Activated CD8-positive, alpha-beta memory T cell treated with anti-CD3 and anti-CD28 coated beads, Interleukin-2, amount 10 ng/mL, durations not matched to agents 7 days and 5 days (primary cell): ENCODE measurements at regions of chr9 and their contacts with region 1.

Region 1: DNA sequence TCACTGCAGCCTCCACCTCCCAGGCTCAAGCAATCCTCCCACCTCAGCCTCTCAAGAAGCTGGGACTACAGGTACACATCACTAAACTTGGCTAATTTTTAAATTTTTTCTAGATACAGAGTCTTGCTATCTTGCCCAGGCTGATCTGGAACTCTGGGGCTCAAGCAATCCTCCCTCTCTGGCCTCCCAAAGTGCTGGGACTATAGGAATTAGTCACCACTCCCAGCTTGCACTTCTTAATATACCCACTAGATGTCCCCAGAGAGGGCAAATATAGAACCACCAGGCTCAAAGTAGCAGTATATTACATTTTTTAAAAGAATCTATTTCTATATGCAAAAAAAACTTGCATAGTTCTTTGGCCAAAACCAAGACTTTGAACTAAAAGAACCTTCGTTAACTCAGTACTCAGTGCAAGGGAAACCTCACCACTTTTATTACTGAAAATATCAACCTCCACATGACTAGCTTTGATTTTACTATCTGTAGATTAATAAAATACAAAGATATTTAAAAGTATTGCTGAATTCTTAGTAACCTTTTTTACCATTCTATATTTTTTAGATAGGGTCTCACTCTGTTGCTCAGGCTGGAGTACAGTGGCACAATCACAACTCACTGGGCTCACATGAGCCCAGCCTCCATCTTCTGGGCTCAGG is 25.8 kb upstream of the HSD17B3 start:
- DNase-seq: peak; percentile 53
- ATAC-seq: peak; percentile 71
- H3K4me3 Mint-ChIP-seq: no peak overlapping the region
- H3K27ac Mint-ChIP-seq: no peak overlapping the region
- H3K4me1 Mint-ChIP-seq: no peaks in the 10 kb centered on the region
- H3K27me3 Mint-ChIP-seq: no peaks in the 10 kb centered on the region

Region 2: DNA sequence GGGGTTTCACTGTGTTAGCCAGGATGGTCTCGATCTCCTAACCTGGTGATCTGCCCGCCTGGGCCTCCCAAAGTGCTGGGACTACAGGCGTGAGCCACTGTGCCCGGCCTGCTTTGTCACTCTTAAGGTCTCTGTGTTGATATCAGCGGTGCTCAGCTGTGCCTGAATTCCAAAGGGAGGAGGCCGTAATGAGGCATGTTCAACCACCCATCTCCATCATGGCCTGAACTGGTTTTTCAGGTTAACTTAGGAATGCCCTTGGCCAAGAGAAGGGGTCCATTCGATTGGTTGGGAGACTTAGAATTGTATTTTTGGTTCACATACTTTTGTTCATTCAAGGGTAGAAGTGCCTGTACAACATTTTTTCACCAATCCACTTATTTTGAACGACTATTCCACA is 47.9 kb before region 1 on chr9:
- CTCF ChIA-PET with region 1: no interaction called
- DNase-seq: no peak
- ATAC-seq: no peak
- H3K4me3 Mint-ChIP-seq: no peak overlapping the region
- H3K27ac Mint-ChIP-seq: no peak overlapping the region
- H3K4me1 Mint-ChIP-seq: no peaks in the 10 kb centered on the region
- H3K27me3 Mint-ChIP-seq: peaks cover 2% of the 10 kb centered on the region

Region 3: DNA sequence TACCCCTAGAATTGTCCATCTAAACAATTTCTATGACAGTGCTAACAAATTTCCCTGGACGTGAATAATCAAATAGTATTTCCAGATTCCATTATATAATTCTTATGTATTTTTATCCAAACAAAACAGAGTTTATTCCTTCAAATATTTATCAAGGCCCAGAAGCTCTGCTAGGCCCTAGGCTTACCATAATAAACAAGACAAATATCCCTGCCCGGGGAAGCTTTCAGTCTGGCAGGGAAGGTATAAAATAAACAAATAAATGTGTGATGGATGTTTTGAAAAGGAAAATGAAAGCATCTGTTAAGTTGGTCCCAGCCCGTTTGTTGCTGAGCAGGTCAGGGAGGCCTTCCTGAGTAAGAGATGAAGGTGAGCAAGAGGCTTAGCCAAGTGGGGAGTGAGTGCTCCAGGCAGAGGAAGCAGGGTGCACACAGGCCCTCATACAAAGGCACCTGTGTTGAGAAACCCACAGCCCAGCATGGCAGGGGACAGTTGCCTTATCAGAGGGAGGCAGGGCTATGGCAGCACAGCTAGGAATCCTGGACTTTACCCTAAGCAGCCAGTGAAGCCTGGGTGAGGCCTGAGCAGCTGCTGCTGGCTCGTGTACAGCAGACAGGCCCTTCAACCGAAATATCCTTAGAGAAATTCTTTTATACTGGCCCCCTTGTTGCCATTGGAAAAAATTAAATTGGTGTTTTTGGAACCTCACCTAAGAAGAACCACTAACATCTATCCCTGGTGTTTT is 63.4 kb after region 1 on chr9:
- CTCF ChIA-PET with region 1: no interaction called
- DNase-seq: peak; percentile 33
- ATAC-seq: peak; percentile 51
- H3K4me3 Mint-ChIP-seq: no peak overlapping the region
- H3K27ac Mint-ChIP-seq: peak overlapping the region; percentile 62
- H3K4me1 Mint-ChIP-seq: peaks cover 12% of the 10 kb centered on the region
- H3K27me3 Mint-ChIP-seq: no peaks in the 10 kb centered on the region

Region 4: GRCh38 chr9:96649620-96650323 is 321.9 kb after region 1 on chr9:
- CTCF ChIA-PET with region 1: interaction called, 10 read pairs
- DNase-seq: no peak
- ATAC-seq: no peak
- H3K4me3 Mint-ChIP-seq: no peak overlapping the region
- H3K27ac Mint-ChIP-seq: no peak overlapping the region
- H3K4me1 Mint-ChIP-seq: peaks cover 7% of the 10 kb centered on the region
- H3K27me3 Mint-ChIP-seq: no peaks in the 10 kb centered on the region

Region 5: DNA sequence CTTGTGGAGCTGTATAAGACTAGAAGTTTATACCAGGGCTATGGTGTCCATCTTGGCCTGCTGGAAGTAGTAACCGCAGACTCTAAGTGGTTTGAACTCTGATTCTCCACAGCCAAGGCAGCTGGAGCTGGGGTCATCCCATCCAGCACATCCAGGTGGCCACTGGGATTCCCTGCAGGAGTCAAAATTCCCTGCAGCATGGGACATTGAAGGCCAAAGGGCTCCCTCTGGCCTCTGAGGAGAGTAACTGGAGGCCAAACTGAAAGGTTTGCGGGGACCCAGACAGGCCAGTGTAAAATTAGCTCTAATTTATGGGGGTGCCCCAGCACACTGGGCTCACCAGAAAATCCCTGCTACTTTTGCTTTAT is 339.5 kb after region 1 on chr9:
- CTCF ChIA-PET with region 1: interaction called, 11 read pairs
- DNase-seq: no peak
- ATAC-seq: no peak
- H3K4me3 Mint-ChIP-seq: no peak overlapping the region
- H3K27ac Mint-ChIP-seq: no peak overlapping the region
- H3K4me1 Mint-ChIP-seq: peaks cover 4% of the 10 kb centered on the region
- H3K27me3 Mint-ChIP-seq: no peaks in the 10 kb centered on the region